Upper lobe of right lung (tissue), 1 donor: ENCODE measurements at regions of chr11 and their contacts with region 1.

Region 1: GRCh38 chr11:64924102-64924851 is at the start of gene PPP2R5B:
- DNase-seq: peak; percentile 96
- ATAC-seq: peak; percentile 96
- H3K4me3 ChIP-seq: peak within 1 kb of the TSS; percentile 99
- H3K27ac ChIP-seq: peak within 1 kb of the TSS; percentile 95
- H3K4me1 ChIP-seq: peaks cover 18% of the 10 kb centered on the region
- H3K27me3 ChIP-seq: no peaks in the 10 kb centered on the region
- CTCF ChIP-seq: no peak
- total RNA-seq, gene PPP2R5B: 29.4 TPM

Region 2: DNA sequence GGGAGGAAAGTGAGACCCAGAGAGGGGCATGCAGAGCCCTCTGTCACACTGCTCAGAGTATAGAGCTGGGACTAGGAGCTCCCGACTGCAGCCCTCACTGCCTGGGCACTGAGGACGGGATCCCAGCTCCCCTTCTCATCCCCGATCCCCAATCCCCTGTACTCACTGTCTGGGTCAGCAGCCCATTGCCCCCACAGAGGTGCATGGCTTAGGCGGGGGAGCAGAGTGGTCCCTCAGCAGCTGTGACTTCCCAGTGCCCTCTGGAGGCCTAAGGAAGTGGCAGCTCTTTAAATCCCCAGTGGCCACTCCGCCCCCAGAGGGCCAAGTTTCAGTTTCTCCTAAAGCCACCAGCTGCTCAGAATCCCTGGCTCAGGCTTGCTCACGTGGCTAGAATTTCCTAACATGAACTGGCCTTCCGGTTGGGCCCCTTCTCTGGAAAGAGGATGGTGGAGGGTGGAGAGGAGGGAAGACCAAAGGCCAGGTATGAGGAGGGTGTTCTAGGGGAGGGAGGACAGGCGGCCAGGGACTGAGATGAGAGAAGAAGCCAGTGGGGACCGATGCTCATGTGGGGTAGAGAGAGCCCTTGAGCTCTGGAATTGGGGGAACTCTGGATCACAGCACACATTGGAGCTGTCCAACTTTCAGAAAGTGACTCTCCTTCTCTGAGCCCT is 72.6 kb after region 1 on chr11 and contains the start of gene BATF2:
- intact Hi-C with region 1: loop called (anchors 10 kb)
- DNase-seq: peak; percentile 90
- ATAC-seq: peak; percentile 98
- H3K4me3 ChIP-seq: peak within 1 kb of the TSS; percentile 69
- H3K27ac ChIP-seq: peak within 1 kb of the TSS; percentile 71
- H3K4me1 ChIP-seq: peaks cover 21% of the 10 kb centered on the region
- H3K27me3 ChIP-seq: no peaks in the 10 kb centered on the region
- CTCF ChIP-seq: peak; percentile 60
- total RNA-seq, gene BATF2: 7.5 TPM